ENCODE measurements at regions of chr17 and their contacts with region 1.

Region 1: GRCh38 chr17:74961657-74962490 is 10.7 kb downstream of the HID1 start:
- DNase-seq: peak; percentile 87
- ATAC-seq: peak; percentile 72
- H3K4me3 ChIP-seq: no peak overlapping the region
- H3K4me3 Mint-ChIP-seq: no peak overlapping the region
- H3K27ac ChIP-seq: no peak overlapping the region
- H3K27ac Mint-ChIP-seq: no peak overlapping the region
- H3K4me1 ChIP-seq: peaks cover 2 to 16% of the 10 kb centered on the region in 2 donors
- H3K4me1 Mint-ChIP-seq: peaks cover 7% of the 10 kb centered on the region
- H3K27me3 ChIP-seq: peaks cover 0 to 9% (median 0%) of the 10 kb centered on the region in 4 experiments
- H3K27me3 Mint-ChIP-seq: peaks cover 11% of the 10 kb centered on the region
- CTCF ChIP-seq: peak; percentile 88

Region 2: GRCh38 chr17:74950207-74950606 is 11.7 kb before region 1 on chr17:
- CTCF ChIA-PET with region 1: interaction called, 13 read pairs
- POLR2A ChIA-PET with region 1: no interaction called
- intact Hi-C with region 1: no loop called
- DNase-seq: no peak
- ATAC-seq: no peak
- H3K4me3 ChIP-seq: no peak overlapping the region
- H3K4me3 Mint-ChIP-seq: no peak overlapping the region
- H3K27ac ChIP-seq: no peak overlapping the region
- H3K27ac Mint-ChIP-seq: no peak overlapping the region
- H3K4me1 ChIP-seq: no peaks in the 10 kb centered on the region
- H3K4me1 Mint-ChIP-seq: no peaks in the 10 kb centered on the region
- H3K27me3 ChIP-seq: peaks cover 0 to 15% (median 0%) of the 10 kb centered on the region in 4 experiments
- H3K27me3 Mint-ChIP-seq: peaks cover 8% of the 10 kb centered on the region
- CTCF ChIP-seq: no peak

Region 3: GRCh38 chr17:75006653-75007052 is 44.8 kb after region 1 on chr17:
- CTCF ChIA-PET with region 1: interaction called, 56 read pairs
- POLR2A ChIA-PET with region 1: no interaction called
- intact Hi-C with region 1: no loop called
- DNase-seq: no peak
- ATAC-seq: no peak
- H3K4me3 ChIP-seq: no peak overlapping the region
- H3K4me3 Mint-ChIP-seq: no peak overlapping the region
- H3K27ac ChIP-seq: no peak overlapping the region
- H3K27ac Mint-ChIP-seq: no peak overlapping the region
- H3K4me1 ChIP-seq: no peaks in the 10 kb centered on the region
- H3K4me1 Mint-ChIP-seq: no peaks in the 10 kb centered on the region
- H3K27me3 ChIP-seq: peaks cover 0 to 4% (median 0%) of the 10 kb centered on the region in 4 experiments
- H3K27me3 Mint-ChIP-seq: peaks cover 4% of the 10 kb centered on the region
- CTCF ChIP-seq: no peak

Region 4: DNA sequence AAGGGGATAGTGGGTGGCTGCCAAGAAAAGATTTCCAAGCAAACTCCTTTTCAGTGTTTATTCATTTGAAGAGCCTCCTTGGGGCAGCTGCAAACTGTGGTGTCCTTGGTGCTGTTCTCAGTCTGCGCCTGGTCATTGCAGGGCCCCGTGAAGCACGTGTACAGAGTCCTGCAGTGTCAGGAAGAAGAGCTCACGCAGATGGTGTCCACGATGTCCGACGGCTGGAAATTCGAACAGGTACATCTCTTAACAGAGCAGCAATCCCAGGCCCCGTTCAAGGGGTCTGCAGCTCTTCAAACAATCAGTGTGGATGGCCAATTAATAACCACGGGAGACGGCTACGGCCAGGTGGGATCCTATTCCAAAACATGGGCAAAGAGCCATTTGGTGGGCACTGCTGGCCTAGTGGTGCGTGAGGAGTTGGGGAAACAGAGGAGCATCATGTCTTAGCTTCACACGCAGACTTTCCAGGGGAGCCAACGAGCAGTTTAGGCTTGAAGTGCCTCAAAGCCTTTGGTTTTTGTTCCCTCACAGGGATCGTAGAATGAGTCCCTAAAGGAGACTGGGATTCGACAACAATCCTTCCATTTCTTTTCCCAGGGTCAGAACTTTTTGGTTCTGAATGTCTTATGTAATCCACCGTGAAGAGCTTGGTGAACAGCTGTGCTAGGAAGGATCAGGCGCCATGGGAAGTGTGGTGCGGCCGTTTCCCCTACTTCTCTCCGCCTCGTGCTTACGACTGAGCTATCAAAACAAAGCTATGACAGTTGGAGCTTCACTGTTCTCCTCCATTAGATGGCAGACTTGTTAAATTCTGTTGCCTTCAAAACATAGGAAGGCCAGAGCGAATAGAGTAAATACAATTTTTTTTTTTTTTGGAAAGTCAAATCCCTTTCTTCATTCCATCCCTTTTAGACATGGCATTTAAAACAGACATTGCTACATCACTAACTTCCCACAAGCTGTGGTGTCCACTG is 97.8 kb after region 1 on chr17:
- CTCF ChIA-PET with region 1: interaction called, 10 read pairs
- POLR2A ChIA-PET with region 1: no interaction called
- intact Hi-C with region 1: no loop called
- DNase-seq: no peak
- ATAC-seq: no peak
- H3K4me3 ChIP-seq: no peak overlapping the region
- H3K4me3 Mint-ChIP-seq: no peak overlapping the region
- H3K27ac ChIP-seq: no peak overlapping the region
- H3K27ac Mint-ChIP-seq: no peak overlapping the region
- H3K4me1 ChIP-seq: no peaks in the 10 kb centered on the region
- H3K4me1 Mint-ChIP-seq: no peaks in the 10 kb centered on the region
- H3K27me3 ChIP-seq: no peaks in the 10 kb centered on the region
- H3K27me3 Mint-ChIP-seq: no peaks in the 10 kb centered on the region
- CTCF ChIP-seq: no peak

Region 5: DNA sequence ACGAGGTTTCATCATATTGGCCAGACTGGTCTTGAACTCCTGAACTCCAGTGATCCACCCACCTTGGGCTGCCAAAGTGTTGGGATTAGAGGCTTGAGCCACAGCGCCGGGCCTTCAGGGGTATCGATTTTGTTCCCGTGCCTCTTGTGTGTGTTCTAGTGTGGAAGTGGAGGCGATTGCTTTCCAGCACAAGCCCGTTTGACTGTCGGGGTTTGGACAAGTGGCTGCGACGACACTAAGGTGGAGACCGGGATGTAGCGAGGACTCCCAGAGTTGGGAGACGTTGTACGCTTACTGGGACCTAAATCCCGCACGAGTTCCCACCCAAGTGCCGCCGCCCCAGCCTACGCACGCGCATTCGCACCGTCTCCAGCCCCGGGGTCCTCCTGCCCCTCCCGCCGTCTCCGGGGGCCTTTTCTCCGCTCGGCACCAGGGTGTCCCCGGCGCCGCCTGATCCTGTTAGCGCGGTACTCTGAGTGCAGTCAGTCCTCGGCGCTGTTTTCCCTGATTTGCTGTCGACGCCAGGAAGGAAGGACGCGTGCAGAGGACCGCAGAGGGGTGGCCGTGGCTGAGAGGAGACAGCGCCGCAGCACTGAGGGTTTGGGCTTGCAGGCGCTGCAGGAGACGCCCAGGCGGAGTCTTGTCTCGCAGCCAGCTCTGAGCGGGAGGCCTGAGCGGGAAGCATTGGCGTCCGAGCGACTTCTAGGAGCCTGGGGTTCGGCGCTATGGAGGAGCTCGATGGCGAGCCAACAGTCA is 243.3 kb after region 1 on chr17 and contains the start of gene NUP85:
- CTCF ChIA-PET with region 1: interaction called, 139 read pairs
- POLR2A ChIA-PET with region 1: interaction called, 5 read pairs
- intact Hi-C with region 1: no loop called
- DNase-seq: peak; percentile 97
- ATAC-seq: peak; percentile 90
- H3K4me3 ChIP-seq: peak within 1 kb of the TSS; percentile 67 to 98 (median 92)
- H3K4me3 Mint-ChIP-seq: peak within 1 kb of the TSS; percentile 99
- H3K27ac ChIP-seq: peak within 1 kb of the TSS; percentile 83 to 85
- H3K27ac Mint-ChIP-seq: peak within 1 kb of the TSS; percentile 100
- H3K4me1 ChIP-seq: peaks cover 9 to 21% of the 10 kb centered on the region in 2 donors
- H3K4me1 Mint-ChIP-seq: peaks cover 26% of the 10 kb centered on the region
- H3K27me3 ChIP-seq: no peaks in the 10 kb centered on the region
- H3K27me3 Mint-ChIP-seq: no peaks in the 10 kb centered on the region
- CTCF ChIP-seq: no peak
- total RNA-seq, gene NUP85: 128 and 142 TPM in 2 replicates